ENCODE measurements at regions of chr1 and their contacts with region 1.

Region 1: DNA sequence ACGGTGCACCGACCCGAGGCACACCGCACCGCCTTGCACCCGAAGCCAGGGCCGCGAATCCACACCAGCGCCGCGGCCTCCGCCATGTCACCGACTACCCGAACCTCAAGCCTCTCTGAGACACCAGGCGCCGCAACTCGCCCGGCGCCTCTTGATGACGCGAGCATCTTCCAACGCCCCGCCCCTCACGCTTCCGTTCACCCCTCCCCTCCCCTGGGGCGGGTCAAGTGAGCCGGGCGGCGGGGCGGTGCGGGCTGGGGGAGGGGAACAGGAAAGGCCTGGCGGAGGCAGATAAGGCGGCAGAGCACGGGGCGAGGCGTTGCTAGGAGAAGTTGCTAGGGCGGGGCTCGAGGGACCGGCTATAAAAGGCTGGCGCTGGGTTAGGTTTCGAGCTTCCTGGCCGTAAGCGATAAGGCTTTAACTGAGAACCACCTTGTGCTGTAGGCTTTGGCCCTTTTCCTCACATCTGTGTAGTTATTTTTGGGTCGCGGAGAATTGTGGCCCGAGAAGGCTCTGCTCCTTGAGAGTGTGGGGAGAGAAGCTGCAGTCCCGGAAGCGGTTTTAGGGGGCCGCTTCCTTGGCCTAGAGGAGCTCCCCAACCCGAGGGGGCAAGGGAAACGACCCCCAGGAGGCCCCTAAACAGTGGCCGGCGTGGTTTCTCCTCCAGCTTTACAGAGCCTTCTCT is at the start of gene SDE2:
- DNase-seq: peak; percentile 100
- ATAC-seq: peak; percentile 78
- H3K4me3 Mint-ChIP-seq: peak within 1 kb of the TSS; percentile 100
- H3K27ac Mint-ChIP-seq: peak within 1 kb of the TSS; percentile 100
- H3K4me1 Mint-ChIP-seq: peaks cover 61% of the 10 kb centered on the region
- H3K27me3 Mint-ChIP-seq: no peaks in the 10 kb centered on the region
- total RNA-seq, gene SDE2: 17.2 to 18.5 TPM

Region 2: GRCh38 chr1:225467193-225468020 is 532.0 kb before region 1 on chr1:
- POLR2A ChIA-PET with region 1: interaction called, 24 read pairs
- DNase-seq: peak; percentile 84
- ATAC-seq: peak; percentile 87
- H3K4me3 Mint-ChIP-seq: peak overlapping the region; percentile 92
- H3K27ac Mint-ChIP-seq: peak overlapping the region; percentile 97
- H3K4me1 Mint-ChIP-seq: peaks cover 24% of the 10 kb centered on the region
- H3K27me3 Mint-ChIP-seq: no peaks in the 10 kb centered on the region

Region 3: DNA sequence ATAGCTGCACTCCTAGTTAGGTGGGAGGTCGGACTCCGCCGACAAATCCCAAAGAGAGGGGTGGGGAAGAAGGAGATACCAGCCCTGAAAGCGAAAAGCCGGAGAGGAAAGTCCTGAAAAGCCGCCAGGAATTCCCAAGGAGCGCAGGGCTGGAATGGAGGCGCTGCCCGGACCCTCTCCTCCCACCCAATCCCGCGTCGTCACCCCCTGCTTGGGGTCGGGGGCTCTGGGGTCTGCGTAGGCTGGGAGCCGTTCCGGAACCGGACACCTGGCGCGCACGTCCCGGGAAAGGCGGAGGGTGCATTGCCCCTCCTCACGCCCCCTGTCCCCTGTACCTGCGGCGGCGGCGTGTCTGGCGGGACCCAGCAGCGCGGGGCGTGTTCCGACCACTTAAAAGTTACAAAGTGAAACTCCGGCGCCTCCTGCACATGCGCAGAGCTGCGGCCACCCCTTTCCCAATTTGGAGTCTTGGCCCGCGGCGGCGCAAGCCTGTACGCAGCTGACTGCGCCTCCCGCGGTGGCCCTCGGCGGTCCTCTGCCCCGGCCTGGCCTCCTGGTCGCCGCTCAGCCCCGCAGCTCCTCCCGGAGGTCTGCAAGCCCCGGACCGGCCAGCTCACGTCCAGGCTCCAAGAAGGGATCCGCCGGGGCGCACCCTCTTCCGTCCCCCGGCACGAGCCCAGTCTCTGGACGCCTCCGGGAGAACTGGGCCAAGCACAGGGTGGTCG is 117.2 kb before region 1 on chr1 and contains the start of gene TMEM63A:
- POLR2A ChIA-PET with region 1: interaction called, 16 read pairs
- DNase-seq: peak; percentile 91
- ATAC-seq: peak; percentile 78
- H3K4me3 Mint-ChIP-seq: peak within 1 kb of the TSS; percentile 87
- H3K27ac Mint-ChIP-seq: peak within 1 kb of the TSS; percentile 90
- H3K4me1 Mint-ChIP-seq: peaks cover 40% of the 10 kb centered on the region
- H3K27me3 Mint-ChIP-seq: peaks cover 7% of the 10 kb centered on the region
- total RNA-seq, gene TMEM63A: 196 to 198 TPM

Region 4: GRCh38 chr1:225987491-225988316 is 11.7 kb before region 1 on chr1:
- POLR2A ChIA-PET with region 1: interaction called, 15 read pairs
- DNase-seq: no peak
- ATAC-seq: peak; percentile 54
- H3K4me3 Mint-ChIP-seq: no peak overlapping the region
- H3K27ac Mint-ChIP-seq: peak overlapping the region; percentile 21
- H3K4me1 Mint-ChIP-seq: peaks cover 21% of the 10 kb centered on the region
- H3K27me3 Mint-ChIP-seq: no peaks in the 10 kb centered on the region

Region 5: GRCh38 chr1:226083302-226084101 is 84.1 kb after region 1 on chr1:
- POLR2A ChIA-PET with region 1: interaction called, 27 read pairs
- DNase-seq: peak; percentile 98
- ATAC-seq: peak; percentile 93
- H3K4me3 Mint-ChIP-seq: peak overlapping the region; percentile 94
- H3K27ac Mint-ChIP-seq: peak overlapping the region; percentile 92
- H3K4me1 Mint-ChIP-seq: peaks cover 5% of the 10 kb centered on the region
- H3K27me3 Mint-ChIP-seq: peaks cover 8% of the 10 kb centered on the region

Region 6: DNA sequence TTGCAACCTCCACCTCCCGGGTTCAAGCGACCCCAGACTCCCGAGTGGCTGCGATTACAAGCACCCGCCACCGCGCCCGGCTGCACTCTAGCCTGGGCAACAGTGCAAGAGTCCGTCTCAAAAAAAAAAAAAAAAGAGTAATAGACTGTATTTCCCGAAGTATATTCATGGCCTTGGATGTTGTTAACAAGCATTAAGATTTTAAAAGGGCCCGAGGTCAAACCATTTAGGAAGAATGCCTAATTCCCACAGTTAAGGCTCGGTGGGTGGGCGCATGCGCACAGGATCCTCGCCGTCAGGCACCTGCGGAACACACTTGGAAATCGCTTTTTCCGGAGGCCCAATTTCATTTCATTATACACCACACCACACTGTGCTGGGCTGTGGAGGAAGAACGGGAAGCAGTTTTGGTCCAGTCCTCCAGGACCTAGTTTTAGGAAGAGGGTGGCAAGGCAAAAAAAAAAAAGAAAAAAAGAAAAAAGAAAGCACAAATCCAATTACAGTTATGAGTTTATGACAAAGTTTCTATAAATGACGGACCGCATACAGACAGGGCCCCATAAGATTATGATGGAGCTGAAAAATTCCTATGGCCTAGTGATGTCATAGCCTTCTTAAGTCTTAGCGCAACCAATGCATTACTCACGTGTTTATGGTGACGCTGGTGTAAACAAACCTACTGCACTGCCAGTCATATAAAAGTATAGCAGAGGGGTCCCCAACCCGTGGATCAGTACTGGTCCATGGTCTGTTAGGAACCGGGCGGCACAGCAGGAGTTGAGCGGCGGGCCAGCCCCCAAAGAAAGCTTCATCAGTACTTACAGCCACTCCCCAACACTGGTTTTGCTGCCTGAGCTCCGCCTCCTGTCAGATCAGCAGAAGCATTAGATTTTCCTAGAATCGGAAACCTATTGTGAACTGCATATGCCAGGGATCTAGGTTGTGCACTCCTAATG is 101.3 kb after region 1 on chr1:
- POLR2A ChIA-PET with region 1: no interaction called
- DNase-seq: peak; percentile 50
- ATAC-seq: peak; percentile 56
- H3K4me3 Mint-ChIP-seq: peak overlapping the region; percentile 81
- H3K27ac Mint-ChIP-seq: no peak overlapping the region
- H3K4me1 Mint-ChIP-seq: peaks cover 13% of the 10 kb centered on the region
- H3K27me3 Mint-ChIP-seq: peaks cover 17% of the 10 kb centered on the region

Region 7: GRCh38 chr1:226121587-226122400 is 122.4 kb after region 1 on chr1:
- POLR2A ChIA-PET with region 1: interaction called, 11 read pairs
- DNase-seq: peak; percentile 91
- ATAC-seq: peak; percentile 79
- H3K4me3 Mint-ChIP-seq: peak overlapping the region; percentile 62
- H3K27ac Mint-ChIP-seq: peak overlapping the region; percentile 64
- H3K4me1 Mint-ChIP-seq: peaks cover 15% of the 10 kb centered on the region
- H3K27me3 Mint-ChIP-seq: peaks cover 9% of the 10 kb centered on the region

Region 8: DNA sequence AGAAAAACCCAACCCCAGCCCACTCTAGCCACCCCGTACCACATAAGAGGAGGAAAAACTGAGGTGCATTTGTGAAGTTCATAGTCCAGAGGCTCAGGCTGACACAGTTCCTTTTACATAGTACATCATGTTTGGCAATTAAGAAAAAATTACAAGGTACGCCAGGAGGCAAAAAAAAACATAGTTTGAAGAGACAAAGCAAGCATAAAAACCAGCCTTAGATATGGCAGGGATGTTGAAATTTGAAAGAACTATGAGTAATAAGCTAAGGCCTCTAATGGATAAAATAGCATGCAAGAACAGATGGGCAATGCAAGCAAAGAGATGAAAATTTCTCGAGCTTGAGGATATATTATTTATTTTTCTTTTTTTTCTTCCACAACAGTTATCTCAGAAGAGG is 256.0 kb after region 1 on chr1:
- POLR2A ChIA-PET with region 1: no interaction called
- DNase-seq: no peak
- ATAC-seq: no peak
- H3K4me3 Mint-ChIP-seq: no peak overlapping the region
- H3K27ac Mint-ChIP-seq: no peak overlapping the region
- H3K4me1 Mint-ChIP-seq: no peaks in the 10 kb centered on the region
- H3K27me3 Mint-ChIP-seq: no peaks in the 10 kb centered on the region